Ovary (tissue), 10 donors: ENCODE measurements at regions of chr17 and their contacts with region 1.

Region 1: DNA sequence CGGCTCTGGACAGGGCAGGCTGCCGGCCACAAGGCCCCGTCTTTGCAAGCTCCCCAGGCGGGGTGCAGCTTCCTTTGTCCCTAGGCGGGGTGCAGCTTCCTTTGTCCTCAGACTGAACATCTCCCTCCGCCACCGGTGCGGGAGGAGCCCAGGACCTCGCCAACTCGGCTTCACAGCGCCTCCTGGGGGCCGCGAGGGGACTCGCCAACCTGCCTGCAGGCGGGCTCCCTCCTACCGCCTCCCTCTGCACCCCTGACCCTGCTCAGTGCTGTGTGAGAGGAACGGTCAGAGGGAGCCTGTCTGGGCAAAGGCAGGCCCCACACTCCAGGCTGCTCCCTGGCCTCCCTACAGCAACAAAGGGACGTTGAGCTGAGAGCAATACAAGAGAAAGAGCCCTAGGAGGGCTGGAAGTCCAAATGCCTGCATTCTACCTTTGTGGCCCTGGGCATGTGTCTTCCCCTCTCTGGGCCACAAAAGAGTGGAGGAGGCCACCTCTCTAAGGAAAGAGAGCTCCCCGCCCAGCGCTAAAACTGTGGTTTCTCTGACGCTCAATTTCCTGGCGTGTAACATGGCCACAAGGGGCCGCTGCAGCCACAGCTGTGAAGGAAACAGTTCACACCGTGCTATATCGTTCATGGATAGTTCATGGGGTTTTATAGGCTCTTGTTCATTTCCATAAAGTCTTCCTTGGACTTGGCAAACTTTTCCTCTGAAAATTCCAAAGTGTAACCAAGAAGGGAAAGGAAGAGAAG is 20.9 kb upstream of the KRT19 start:
- DNase-seq: peak; percentile 84 to 92 (median 86)
- H3K4me3 ChIP-seq: no peak overlapping the region
- H3K27ac ChIP-seq: peak overlapping the region in 1 of 2 donors; percentile 75
- H3K4me1 ChIP-seq: peaks cover 14% of the 10 kb centered on the region
- H3K27me3 ChIP-seq: no peaks in the 10 kb centered on the region
- CTCF ChIP-seq: peak; percentile 59 to 69 (median 68)
- EP300 ChIP-seq: no peak
- POLR2A ChIP-seq: no peak

Region 2: DNA sequence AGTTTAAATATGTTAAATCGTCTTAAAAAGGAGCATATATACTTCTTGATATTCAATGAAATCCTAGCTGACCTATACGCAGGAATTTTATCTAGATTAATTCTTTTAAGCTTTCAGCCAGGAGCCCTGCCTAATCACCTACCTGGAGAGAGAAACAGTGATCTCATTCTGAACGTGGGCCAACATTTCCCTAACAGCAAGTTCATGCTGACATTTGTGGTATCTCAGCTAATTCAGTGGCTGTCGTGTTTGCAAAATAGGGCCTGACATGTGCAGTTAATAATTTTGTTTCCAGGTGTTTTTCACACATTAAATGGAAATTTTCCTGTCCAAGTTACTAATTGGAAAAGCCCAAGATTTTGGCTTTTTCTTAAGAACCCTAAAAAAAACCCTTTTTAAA is 862.8 kb before region 1 on chr17:
- intact Hi-C with region 1: loop called in 1 of 4 experiments (anchors 5 kb)
- DNase-seq: no peak
- H3K4me3 ChIP-seq: no peak overlapping the region
- H3K27ac ChIP-seq: no peak overlapping the region
- H3K4me1 ChIP-seq: no peaks in the 10 kb centered on the region
- H3K27me3 ChIP-seq: no peaks in the 10 kb centered on the region
- CTCF ChIP-seq: no peak
- EP300 ChIP-seq: no peak
- POLR2A ChIP-seq: no peak

Region 3: DNA sequence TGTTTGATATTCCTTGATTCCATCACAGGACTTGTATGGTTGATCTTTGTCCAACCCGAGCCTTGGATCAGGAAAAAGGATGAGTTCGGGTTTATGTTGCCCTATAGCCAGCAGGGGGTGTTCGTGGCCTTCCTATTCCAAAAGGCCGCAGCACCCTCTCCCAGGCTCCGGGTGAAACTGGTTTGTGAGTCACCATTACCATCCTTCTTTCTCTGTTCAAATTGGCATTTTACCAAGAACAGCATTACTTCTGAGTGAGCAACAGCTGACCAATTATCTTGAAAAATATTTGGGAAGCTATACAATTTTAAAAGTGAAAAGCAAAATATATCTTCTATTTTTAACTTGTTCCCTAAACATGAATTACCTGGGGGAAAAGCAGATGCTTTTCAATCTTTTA is 639.7 kb before region 1 on chr17:
- intact Hi-C with region 1: loop called in 3 of 4 experiments (anchors 5 to 10 kb)
- DNase-seq: peak; percentile 64 to 84 (median 80)
- H3K4me3 ChIP-seq: no peak overlapping the region
- H3K27ac ChIP-seq: no peak overlapping the region
- H3K4me1 ChIP-seq: no peaks in the 10 kb centered on the region
- H3K27me3 ChIP-seq: no peaks in the 10 kb centered on the region
- CTCF ChIP-seq: peak; percentile 48 to 80 (median 69)
- EP300 ChIP-seq: no peak
- POLR2A ChIP-seq: no peak

Region 4: GRCh38 chr17:40915199-40915661 is 633.8 kb before region 1 on chr17:
- intact Hi-C with region 1: loop called in 2 of 4 experiments (anchors 5 to 10 kb)
- DNase-seq: no peak
- H3K4me3 ChIP-seq: no peak overlapping the region
- H3K27ac ChIP-seq: no peak overlapping the region
- H3K4me1 ChIP-seq: no peaks in the 10 kb centered on the region
- H3K27me3 ChIP-seq: no peaks in the 10 kb centered on the region
- CTCF ChIP-seq: no peak
- EP300 ChIP-seq: no peak
- POLR2A ChIP-seq: no peak

Region 5: GRCh38 chr17:41648411-41649195 is 99.6 kb after region 1 on chr17:
- intact Hi-C with region 1: loop called in 3 of 4 experiments (anchors 5 kb)
- DNase-seq: peak; percentile 79 to 92 (median 90)
- H3K4me3 ChIP-seq: peak overlapping the region; percentile 33
- H3K27ac ChIP-seq: no peak overlapping the region
- H3K4me1 ChIP-seq: peaks cover 4% of the 10 kb centered on the region
- H3K27me3 ChIP-seq: no peaks in the 10 kb centered on the region
- CTCF ChIP-seq: peak; percentile 91 to 97 (median 94)
- EP300 ChIP-seq: no peak
- POLR2A ChIP-seq: no peak

Region 6: DNA sequence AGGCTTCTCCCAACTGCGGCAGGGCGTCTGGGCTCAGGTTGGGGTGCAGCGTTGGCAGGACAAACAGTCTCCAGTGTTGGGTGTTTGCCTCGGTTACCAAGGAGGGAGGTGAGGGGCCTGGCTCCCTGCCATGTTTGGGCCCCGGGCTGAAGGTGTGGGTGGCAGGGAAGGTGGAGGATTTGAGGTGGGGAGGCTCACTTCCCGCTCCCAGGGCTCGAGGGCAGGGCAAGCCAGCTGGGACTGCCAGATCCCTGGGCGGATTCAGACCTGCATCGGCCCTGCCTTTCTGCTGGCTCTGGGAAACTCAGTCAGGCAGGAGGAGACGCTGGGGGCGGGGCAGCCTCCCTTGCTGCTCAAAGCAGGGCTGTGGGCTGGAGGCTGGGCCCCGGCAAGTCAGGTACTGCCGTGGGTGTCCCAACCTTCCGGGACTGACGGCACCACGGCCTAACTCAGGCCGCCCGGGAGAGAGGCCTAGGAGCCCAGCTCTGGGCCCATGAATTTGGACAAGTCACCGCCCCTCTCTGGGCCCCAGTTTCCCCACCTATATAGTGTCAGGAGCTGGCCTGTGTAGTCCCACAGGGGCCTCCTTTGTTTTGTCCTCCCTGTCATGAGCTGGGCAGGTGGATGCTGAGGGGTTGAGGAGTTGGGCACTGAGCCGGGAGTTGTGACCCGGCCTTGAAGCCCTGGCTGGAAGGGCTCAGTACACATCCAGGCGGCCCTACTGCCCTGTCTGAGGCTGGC is 106.8 kb after region 1 on chr17:
- intact Hi-C with region 1: loop called in 1 of 4 experiments (anchors 5 kb)
- DNase-seq: peak in 1 of 5 donors; percentile 71
- H3K4me3 ChIP-seq: no peak overlapping the region
- H3K27ac ChIP-seq: no peak overlapping the region
- H3K4me1 ChIP-seq: no peaks in the 10 kb centered on the region
- H3K27me3 ChIP-seq: no peaks in the 10 kb centered on the region
- CTCF ChIP-seq: no peak
- EP300 ChIP-seq: no peak
- POLR2A ChIP-seq: no peak